IMR-90 (cell line): ENCODE measurements at regions of chr19 and their contacts with region 1.

Region 1: GRCh38 chr19:17052439-17053210 is 22.6 kb downstream of the HAUS8 start:
- DNase-seq: peak; percentile 59
- ATAC-seq: peak; percentile 72
- H3K4me3 ChIP-seq: no peak overlapping the region
- H3K27ac ChIP-seq: no peak overlapping the region
- H3K4me1 ChIP-seq: peaks cover 6% of the 10 kb centered on the region
- H3K27me3 ChIP-seq: no peaks in the 10 kb centered on the region
- CTCF ChIP-seq: peak; percentile 63
- POLR2A ChIP-seq: no peak
- RAD21 ChIP-seq: peak; percentile 68

Region 2: DNA sequence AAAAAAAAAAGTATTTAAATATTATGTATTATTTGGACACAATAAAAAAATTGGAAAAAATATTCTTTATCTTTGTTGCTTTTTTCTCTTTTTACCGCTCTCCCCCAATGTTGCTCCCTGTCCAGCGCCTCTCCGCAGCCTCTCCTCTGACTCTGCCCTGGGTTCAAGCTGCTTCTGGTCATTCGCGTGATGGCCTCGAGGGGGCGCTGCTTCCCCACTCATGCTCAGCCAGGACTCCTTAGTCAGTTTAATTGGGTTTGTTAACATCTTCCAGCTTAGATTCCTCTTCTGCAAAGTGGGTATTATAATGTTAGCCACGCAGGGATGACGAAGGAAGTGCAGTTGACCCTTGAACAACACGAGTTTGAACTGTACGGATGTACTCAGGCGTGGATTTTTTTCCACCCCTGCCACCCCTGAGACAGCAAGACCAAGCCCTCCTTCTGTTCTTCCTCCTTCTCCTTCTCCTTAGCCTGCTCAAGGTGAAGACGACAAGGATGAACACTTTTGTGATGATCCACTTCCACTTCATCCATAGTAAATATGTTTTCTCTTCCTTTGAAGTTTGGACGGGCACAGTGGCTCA is 337.8 kb before region 1 on chr19:
- CTCF ChIA-PET with region 1: interaction called, 7 read pairs
- POLR2A ChIA-PET with region 1: no interaction called
- dilution Hi-C with region 1: no loop called
- in situ Hi-C with region 1: no loop called
- intact Hi-C with region 1: loop called (anchors 1 kb)
- DNase-seq: peak; percentile 24
- ATAC-seq: peak; percentile 82
- H3K4me3 ChIP-seq: no peak overlapping the region
- H3K27ac ChIP-seq: no peak overlapping the region
- H3K4me1 ChIP-seq: no peaks in the 10 kb centered on the region
- H3K27me3 ChIP-seq: peaks cover 3% of the 10 kb centered on the region; the same call in 1 of the 2 replicates
- CTCF ChIP-seq: peak; percentile 71
- POLR2A ChIP-seq: no peak
- RAD21 ChIP-seq: peak; percentile 77

Region 3: DNA sequence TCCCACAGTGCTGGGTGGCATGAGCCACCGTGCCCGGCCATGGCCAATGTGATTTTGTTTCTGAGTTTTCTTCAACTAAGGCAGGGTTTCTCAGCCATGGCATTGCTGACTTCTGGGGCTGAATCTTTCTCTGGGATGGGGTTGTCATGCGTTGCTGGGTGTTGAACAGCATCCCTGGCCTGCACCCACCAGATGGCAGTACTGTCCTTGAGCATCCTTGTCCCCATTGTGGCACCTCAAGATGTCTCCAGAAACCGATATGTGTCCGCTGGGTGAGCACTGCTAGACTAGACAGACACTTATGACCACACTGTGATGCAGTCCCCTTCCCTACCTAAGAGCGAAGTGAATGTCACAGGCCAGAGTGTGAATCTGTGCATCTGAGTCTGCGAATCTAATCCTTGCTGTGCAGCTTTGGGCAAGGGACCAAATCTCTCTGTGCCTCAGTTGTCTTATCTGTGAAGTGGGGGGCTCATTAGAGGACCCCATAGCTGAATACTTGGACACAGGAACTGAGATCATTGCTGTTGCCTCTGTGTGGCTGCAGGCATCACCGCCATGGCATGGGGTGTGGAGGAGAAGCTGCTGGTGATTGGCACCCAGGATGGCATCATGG is 273.7 kb before region 1 on chr19:
- CTCF ChIA-PET with region 1: interaction called, 4 read pairs
- POLR2A ChIA-PET with region 1: no interaction called
- dilution Hi-C with region 1: no loop called
- in situ Hi-C with region 1: loop called (anchors 5 kb)
- intact Hi-C with region 1: loop called (anchors 2 kb)
- DNase-seq: peak; percentile 55
- ATAC-seq: peak; percentile 88
- H3K4me3 ChIP-seq: no peak overlapping the region
- H3K27ac ChIP-seq: no peak overlapping the region
- H3K4me1 ChIP-seq: no peaks in the 10 kb centered on the region
- H3K27me3 ChIP-seq: peaks cover 3% of the 10 kb centered on the region; the same call in 1 of the 2 replicates
- CTCF ChIP-seq: peak; percentile 60
- POLR2A ChIP-seq: no peak
- RAD21 ChIP-seq: peak; percentile 79

Region 4: DNA sequence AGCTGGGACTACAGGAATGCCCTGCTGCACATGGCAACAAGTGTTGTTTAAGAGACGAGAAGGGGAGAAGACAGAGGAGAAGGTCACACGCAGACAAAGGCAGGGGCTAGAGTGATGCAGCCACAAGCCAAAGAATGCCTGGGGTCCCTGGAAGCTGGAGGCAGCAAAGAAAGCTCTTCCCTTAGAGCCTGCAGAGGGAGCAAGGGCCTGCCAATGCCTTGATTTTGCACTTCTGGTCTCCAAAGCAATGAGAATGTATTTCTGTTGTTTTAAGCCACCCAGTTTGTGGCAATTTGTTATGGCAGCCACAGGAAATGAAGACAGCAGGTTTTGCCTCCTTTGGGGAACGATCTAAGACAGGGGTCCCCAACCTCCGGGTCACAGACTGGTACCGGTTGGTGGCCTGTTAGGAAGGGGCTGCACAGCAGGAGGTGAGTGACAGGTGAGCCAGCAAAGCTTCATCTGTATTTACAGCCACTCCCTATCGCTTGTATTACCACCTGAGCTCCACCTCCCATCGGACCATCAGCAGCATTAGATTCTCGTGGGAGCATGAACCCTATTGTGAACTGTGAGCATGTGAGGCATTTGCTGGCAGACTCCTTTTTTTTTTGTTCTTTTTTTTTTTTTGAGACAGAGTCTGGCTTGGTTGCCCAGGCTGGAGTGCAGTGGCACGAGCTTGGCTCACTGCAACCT is 141.7 kb before region 1 on chr19:
- CTCF ChIA-PET with region 1: no interaction called
- POLR2A ChIA-PET with region 1: no interaction called
- dilution Hi-C with region 1: no loop called
- in situ Hi-C with region 1: no loop called
- intact Hi-C with region 1: no loop called
- DNase-seq: no peak
- ATAC-seq: no peak
- H3K4me3 ChIP-seq: no peak overlapping the region
- H3K27ac ChIP-seq: no peak overlapping the region
- H3K4me1 ChIP-seq: no peaks in the 10 kb centered on the region
- H3K27me3 ChIP-seq: no peaks in the 10 kb centered on the region; the same call in 1 of the 2 replicates
- CTCF ChIP-seq: no peak
- POLR2A ChIP-seq: no peak
- RAD21 ChIP-seq: no peak

Region 5: GRCh38 chr19:17322854-17323253 is 270.2 kb after region 1 on chr19:
- CTCF ChIA-PET with region 1: no interaction called
- POLR2A ChIA-PET with region 1: interaction called, 10 read pairs
- dilution Hi-C with region 1: no loop called
- in situ Hi-C with region 1: no loop called
- intact Hi-C with region 1: no loop called
- DNase-seq: no peak
- ATAC-seq: no peak; the same call in 1 of the 2 replicates
- H3K4me3 ChIP-seq: no peak overlapping the region
- H3K27ac ChIP-seq: no peak overlapping the region
- H3K4me1 ChIP-seq: no peaks in the 10 kb centered on the region
- H3K27me3 ChIP-seq: no peaks in the 10 kb centered on the region
- CTCF ChIP-seq: no peak
- POLR2A ChIP-seq: no peak
- RAD21 ChIP-seq: no peak